ENCODE measurements at regions of chr2 and their contacts with region 1.

Region 1: DNA sequence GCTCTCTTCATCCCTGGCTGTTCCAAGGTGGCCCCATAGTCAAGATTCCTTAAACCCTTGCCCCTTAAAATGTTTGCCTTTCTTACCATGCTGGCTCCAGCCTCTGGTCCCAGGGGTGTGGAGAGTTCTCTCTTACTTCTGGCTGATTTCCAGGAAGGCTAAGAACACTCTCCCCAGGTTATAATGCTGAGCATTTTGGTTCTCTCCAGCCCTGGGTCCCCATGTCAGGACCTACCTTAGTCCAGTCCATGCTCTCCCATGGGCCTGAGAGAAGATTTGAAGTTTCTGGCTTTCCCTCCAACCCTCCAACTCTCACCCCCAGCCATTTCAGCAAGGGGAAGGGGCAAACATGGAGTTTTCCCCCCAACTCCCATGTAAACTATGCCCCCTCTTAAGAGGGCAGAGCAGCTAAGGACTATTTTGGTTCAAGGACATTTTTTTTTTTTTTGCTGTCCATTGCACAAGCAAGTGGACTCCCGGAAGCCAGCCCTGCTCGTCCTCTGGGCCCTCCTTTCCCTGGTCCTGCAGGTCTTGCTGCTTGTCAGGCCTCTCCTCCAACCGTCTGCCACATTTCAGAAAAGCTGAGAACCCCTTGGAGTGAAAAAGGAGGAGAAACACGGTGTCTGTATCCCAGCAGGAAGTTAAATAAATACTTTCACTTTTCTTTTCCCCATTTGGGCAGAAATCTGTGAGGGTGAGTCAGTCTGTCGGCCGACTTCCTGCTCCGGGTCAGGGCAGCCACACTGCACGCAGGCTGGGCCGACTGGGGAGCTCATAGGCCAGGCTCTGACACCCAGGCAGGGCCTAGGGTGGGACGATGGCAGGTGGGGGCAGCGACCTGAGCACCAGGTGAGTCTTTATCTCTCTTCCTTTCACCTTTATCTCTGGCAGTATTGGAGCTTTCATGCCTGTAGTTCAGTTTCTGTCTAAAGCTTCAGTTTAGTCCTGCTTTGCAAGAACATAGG is at the start of gene SP140L:
- DNase-seq: peak; percentile 78
- ATAC-seq: peak; percentile 94
- H3K4me3 ChIP-seq: peak within 1 kb of the TSS; percentile 62 to 83 (median 72)
- H3K4me3 Mint-ChIP-seq: peak within 1 kb of the TSS; percentile 98
- H3K27ac ChIP-seq: peak within 1 kb of the TSS; percentile 95
- H3K27ac Mint-ChIP-seq: peak within 1 kb of the TSS; percentile 99
- H3K4me1 ChIP-seq: peaks cover 52 to 72% of the 10 kb centered on the region in 2 donors
- H3K4me1 Mint-ChIP-seq: peaks cover 73% of the 10 kb centered on the region
- H3K27me3 ChIP-seq: no peaks in the 10 kb centered on the region
- H3K27me3 Mint-ChIP-seq: no peaks in the 10 kb centered on the region
- CTCF ChIP-seq: no peak
- total RNA-seq, gene SP140L: 154 and 167 TPM in 2 replicates

Region 2: DNA sequence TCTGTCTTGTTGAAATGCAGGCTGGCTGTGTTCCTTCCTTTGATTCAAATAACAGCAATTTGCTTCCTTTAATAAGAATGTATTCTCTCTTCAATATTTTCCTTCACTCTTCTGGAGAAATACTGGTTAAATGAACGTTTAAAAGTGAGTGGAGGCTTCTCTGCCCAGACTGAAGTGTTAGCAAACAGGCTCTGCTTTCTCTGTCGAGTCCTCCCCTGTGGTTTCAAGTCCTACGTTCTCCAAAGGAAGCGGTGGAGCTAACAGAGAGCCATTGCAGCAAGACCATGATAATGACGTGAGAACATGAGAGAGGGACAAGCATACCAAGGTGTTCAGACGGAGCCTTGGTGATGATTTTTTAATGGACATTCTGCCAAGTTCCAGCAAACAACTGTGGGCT is 1029.5 kb before region 1 on chr2:
- CTCF ChIA-PET with region 1: no interaction called
- POLR2A ChIA-PET with region 1: no interaction called
- intact Hi-C with region 1: no loop called
- DNase-seq: no peak
- ATAC-seq: no peak
- H3K4me3 ChIP-seq: no peak overlapping the region
- H3K4me3 Mint-ChIP-seq: no peak overlapping the region
- H3K27ac ChIP-seq: no peak overlapping the region
- H3K27ac Mint-ChIP-seq: no peak overlapping the region
- H3K4me1 ChIP-seq: no peaks in the 10 kb centered on the region
- H3K4me1 Mint-ChIP-seq: no peaks in the 10 kb centered on the region
- H3K27me3 ChIP-seq: peaks cover 0 to 2% (median 0%) of the 10 kb centered on the region in 4 experiments
- H3K27me3 Mint-ChIP-seq: no peaks in the 10 kb centered on the region
- CTCF ChIP-seq: no peak

Region 3: DNA sequence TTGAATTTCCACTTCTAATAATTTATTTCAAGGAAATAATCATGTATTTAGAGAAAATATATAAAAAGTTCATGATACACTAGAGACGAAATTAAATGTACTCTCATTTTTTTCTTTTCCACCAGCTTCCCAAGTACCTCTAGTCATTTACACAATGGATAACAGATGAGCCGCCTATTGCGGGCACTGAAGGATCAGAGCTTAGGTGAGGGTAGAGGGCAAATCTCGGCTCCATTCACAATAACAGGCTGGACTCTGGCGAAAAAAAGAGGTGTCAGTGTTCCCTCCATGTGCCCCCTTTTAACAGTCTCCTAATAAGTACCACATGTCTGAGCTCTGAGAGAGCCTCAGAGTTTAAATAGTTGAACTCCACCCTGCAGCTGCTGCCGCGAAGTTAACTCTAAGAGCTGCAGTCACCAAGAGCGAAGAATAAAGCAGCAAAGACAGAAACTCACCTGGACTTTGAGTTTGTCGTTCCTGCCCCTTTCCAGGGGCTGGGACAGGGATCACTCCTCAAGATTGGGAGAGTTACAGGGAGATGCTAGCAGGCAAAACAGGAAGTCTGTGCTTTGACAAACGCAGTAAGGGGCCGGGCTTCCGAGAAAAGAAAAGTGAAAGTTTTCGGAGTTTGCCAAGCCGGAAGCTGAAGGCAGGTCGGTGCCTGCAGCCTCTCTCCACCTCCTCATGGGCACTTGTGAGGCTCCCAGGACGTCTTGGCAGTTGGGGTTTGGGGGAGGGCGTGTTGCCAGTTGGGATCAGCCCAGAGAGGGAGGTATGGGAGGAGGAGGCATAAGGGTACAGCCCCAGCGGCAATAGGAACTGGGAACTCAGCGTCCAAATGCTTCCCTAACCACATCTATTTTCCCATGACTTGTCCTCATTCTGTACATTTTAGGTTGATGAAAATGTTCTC is 107.1 kb before region 1 on chr2 and contains the start of gene SP110:
- CTCF ChIA-PET with region 1: no interaction called
- POLR2A ChIA-PET with region 1: no interaction called
- intact Hi-C with region 1: loop called (anchors 1 kb)
- DNase-seq: peak; percentile 87
- ATAC-seq: peak; percentile 76
- H3K4me3 ChIP-seq: peak within 1 kb of the TSS; percentile 66 to 100 (median 89)
- H3K4me3 Mint-ChIP-seq: peak within 1 kb of the TSS; percentile 99
- H3K27ac ChIP-seq: peak within 1 kb of the TSS; percentile 71 to 80
- H3K27ac Mint-ChIP-seq: peak within 1 kb of the TSS; percentile 96
- H3K4me1 ChIP-seq: peaks cover 72 to 83% of the 10 kb centered on the region in 2 donors
- H3K4me1 Mint-ChIP-seq: peaks cover 78% of the 10 kb centered on the region
- H3K27me3 ChIP-seq: no peaks in the 10 kb centered on the region
- H3K27me3 Mint-ChIP-seq: no peaks in the 10 kb centered on the region
- CTCF ChIP-seq: no peak
- total RNA-seq, gene SP110: 261 and 280 TPM in 2 replicates

Region 4: DNA sequence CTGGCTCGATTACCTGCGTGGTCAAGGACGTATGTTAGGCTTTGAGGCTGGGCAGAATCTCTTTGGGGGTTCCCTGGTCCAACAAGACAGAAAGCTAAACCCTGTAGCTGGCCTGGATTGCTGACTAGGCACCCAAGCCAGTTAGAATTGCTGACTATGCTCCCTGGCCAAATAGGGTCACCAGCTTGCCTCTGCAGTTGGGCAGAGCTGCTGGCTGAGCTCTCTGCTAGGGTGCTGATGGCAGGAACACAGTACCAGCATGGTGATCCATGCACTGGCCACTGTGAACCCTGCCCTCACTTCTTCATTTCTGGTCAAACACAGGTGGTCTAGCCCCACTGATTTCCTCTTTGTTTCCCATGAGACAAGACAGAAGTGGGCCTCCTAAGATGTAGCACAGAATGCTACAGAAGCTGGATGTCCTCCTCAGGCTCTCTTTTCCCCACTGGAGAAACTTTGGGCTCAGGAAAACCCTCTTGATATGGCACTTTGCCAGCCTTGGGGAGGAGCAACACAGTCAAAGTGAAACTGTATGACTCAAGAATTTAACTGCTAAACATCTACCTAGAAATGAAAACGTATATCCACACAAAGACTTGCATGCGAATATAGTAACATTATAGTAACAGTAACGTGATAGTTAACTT is 21.0 kb after region 1 on chr2:
- CTCF ChIA-PET with region 1: no interaction called
- POLR2A ChIA-PET with region 1: interaction called, 4 read pairs
- intact Hi-C with region 1: loop called (anchors 2 kb)
- DNase-seq: peak; percentile 27
- ATAC-seq: peak; percentile 62
- H3K4me3 ChIP-seq: no peak overlapping the region
- H3K4me3 Mint-ChIP-seq: peak overlapping the region; percentile 66
- H3K27ac ChIP-seq: peak overlapping the region in 1 of 2 donors; percentile 59
- H3K27ac Mint-ChIP-seq: peak overlapping the region; percentile 83
- H3K4me1 ChIP-seq: peaks cover 14 to 20% of the 10 kb centered on the region in 2 donors
- H3K4me1 Mint-ChIP-seq: peaks cover 57% of the 10 kb centered on the region
- H3K27me3 ChIP-seq: no peaks in the 10 kb centered on the region
- H3K27me3 Mint-ChIP-seq: no peaks in the 10 kb centered on the region
- CTCF ChIP-seq: no peak

Region 5: GRCh38 chr2:230411570-230412370 is 85.0 kb after region 1 on chr2:
- CTCF ChIA-PET with region 1: interaction called, 3 read pairs
- POLR2A ChIA-PET with region 1: interaction called, 3 read pairs
- intact Hi-C with region 1: loop called (anchors 5 kb)
- DNase-seq: peak; percentile 81
- ATAC-seq: peak; percentile 62
- H3K4me3 ChIP-seq: peak overlapping the region; percentile 69 to 92 (median 88)
- H3K4me3 Mint-ChIP-seq: peak overlapping the region; percentile 98
- H3K27ac ChIP-seq: peak overlapping the region; percentile 88 to 92
- H3K27ac Mint-ChIP-seq: peak overlapping the region; percentile 99
- H3K4me1 ChIP-seq: peaks cover 54 to 63% of the 10 kb centered on the region in 2 donors
- H3K4me1 Mint-ChIP-seq: peaks cover 72% of the 10 kb centered on the region
- H3K27me3 ChIP-seq: no peaks in the 10 kb centered on the region
- H3K27me3 Mint-ChIP-seq: no peaks in the 10 kb centered on the region
- CTCF ChIP-seq: no peak

Measured in B cell (primary cell).